ENCODE measurements at regions of chr7 and their contacts with region 1.

Region 1: GRCh38 chr7:52233248-52233647 is 802.2 kb upstream of the POM121L12 start:
- DNase-seq: no peak
- ATAC-seq: no peak
- H3K4me3 ChIP-seq: no peak overlapping the region
- H3K27ac ChIP-seq: no peak overlapping the region
- H3K4me1 ChIP-seq: no peaks in the 10 kb centered on the region
- H3K27me3 ChIP-seq: no peaks in the 10 kb centered on the region
- CTCF ChIP-seq: no peak

Region 2: DNA sequence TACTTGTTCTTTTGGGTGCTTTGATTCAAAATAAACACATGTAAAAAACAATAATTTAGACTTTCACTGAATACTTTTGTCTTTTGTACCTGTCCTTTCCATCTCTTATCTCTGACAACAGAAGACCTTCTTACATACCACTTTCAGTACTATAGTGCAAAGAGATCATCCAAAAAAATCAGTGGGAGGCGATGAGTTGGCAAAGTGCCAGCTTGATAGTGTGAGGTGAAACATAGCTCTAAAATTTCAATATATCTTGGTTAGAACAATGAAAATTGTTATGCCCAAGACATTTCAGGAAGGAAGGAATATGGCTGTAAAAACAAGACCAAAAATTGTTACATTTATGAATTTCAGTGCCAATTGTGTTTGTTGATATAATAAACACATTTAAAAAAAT is 526.4 kb before region 1 on chr7:
- intact Hi-C with region 1: loop called in 1 of 10 experiments (anchors 5 kb)
- DNase-seq: no peak
- ATAC-seq: no peak
- H3K4me3 ChIP-seq: no peak overlapping the region
- H3K27ac ChIP-seq: no peak overlapping the region
- H3K4me1 ChIP-seq: no peaks in the 10 kb centered on the region
- H3K27me3 ChIP-seq: no peaks in the 10 kb centered on the region
- CTCF ChIP-seq: no peak

Measured in heart right ventricle (tissue), 16 donors.